Posterior vena cava (tissue), 2 donors: ENCODE measurements at regions of chr11 and their contacts with region 1.

Region 1: DNA sequence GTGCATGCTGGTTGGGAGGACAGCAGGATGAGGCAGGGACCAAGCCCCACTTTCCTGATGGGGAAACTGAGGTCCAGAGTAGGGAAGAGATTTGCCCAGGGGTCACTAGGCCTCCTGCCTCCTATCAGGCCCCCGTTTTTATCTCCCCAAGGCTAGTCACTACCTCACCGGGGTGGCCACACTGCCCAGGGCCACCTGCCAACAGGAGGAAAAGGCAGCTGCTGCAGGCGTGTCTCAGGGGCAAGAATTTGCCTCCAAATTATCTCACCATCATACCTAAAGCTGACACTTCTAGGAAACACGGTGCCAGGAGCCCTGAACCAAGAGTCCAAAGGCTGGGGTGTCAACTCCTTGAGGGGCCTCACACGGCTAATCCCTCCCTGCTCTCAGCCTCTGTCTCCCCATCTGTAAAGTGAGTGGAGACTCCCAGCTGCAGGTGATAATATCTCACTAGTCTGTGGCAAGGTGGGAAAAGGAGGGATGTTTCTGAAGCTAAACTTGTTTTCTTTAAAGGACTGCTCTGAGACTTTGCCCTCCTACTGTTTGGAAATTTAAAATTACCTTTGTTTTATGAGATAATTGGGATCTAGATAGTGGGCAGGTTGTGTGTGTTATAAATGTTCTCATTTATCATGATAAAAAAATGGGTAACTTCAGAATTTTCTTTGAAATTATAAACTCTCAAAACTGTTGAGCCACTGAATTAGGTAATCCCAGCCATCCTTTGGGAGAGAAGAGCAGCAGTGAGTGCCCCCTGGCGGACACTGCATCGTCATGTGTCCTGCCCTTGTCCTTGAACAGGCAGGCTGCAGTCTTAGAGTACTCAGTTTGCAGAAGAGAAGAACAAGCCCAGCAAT is 60.0 kb downstream of the MYO7A start:
- DNase-seq: peak; percentile 95

Region 2: DNA sequence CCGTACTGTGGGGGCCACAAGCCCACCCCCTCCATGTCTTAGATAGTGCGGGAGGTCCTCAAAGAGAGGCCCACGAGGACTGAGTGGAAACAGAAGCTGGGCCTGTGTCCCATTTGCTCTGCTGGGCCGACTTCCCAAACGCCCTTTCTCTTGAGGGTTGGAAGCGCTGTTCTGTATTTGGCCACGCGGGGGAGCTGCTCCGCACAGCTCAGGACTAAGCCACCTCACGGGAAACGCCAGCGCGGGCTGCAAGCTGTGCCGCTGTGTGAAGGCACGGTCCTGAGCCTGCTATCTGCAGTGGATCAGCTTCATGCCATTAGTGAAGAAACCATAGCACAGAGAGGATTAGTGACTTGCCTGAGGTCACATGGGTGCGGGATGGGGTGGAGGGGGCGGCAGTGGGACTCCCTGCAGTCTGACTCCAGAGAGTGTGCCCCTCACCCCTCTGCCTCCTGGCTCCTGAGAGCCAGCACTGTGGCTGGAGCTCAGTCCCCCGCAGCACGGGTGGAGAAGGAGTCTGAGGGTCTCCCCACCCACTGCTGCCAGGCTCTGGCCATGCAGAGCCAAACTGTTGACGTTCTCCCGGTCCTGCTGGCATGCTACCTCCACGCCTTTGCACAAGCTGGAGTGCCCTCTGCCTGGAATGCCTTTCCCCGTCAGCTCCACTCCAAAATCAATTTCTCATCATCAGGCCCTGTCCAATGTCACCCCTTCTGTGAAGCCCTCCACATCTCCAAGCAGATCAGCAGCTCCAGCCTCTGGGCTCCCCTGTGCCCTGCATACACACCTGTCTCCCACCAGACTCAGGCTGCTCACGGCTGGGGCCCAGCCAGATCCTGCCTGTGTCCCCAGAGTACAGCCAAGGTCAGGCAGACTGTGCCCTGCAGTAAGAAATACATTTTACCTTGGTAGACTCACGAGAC is 466.0 kb before region 1 on chr11:
- intact Hi-C with region 1: loop called in 1 of 2 experiments (anchors 10 kb)
- DNase-seq: peak; percentile 97

Region 3: GRCh38 chr11:77047007-77047927 is 140.7 kb before region 1 on chr11:
- intact Hi-C with region 1: loop called in 1 of 2 experiments (anchors 10 kb)
- DNase-seq: no peak

Region 4: GRCh38 chr11:77127232-77127911 is 60.6 kb before region 1 on chr11:
- intact Hi-C with region 1: loop called (anchors 2 to 5 kb)
- DNase-seq: peak; percentile 87

Region 5: DNA sequence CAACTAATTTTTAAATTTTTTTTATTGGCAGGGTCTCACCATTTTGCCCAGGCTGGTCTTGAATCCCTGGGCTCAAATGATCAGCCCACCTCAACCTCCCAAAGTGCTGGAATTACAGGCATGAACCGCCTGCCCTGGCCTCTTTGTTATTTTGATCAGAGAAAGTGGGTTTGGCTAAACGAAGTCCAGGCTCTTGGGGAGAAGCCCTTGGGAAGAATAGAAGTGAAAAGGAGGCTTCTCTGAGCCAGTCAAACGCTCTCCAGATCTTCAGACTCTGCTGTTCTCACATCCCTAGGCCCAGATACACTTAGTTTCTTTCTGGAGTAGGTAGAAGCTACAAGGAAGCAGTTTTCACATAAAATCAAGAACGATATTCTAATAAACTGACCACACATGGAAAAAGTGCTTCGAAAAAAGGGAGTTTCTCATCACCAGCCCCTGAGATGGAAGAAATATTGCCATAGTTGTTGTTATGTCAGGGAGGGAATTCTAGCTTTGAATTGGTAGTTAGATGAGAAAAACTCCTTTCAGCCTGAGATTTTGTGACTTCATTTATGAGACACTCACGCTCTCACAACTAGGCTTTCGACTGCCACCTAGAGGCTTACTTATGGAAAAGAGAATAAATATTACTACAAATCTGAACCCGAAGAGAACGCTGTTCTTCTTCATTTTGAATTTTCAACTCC is 360.0 kb after region 1 on chr11:
- intact Hi-C with region 1: loop called (anchors 10 kb)
- DNase-seq: no peak

Region 6: DNA sequence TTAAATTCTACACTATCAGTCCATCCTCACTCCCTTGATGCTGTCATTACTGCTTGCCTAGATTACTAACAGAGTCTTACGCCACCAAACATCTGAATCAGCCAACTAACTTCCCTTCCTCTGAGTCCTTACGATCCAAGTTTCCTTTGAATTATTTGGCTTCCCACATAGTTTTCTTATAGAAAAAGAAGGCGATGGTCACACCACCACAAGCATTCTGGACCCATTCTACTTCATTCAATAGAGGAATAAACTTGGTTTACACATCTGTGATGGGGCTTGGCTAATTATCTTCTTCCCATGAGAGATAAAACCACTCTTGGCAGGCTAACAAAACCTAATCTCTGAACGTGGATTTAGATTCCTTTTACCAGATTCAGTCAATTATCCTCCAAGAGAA is 771.4 kb after region 1 on chr11:
- intact Hi-C with region 1: no loop called
- DNase-seq: no peak